IMR-90 (cell line): ENCODE measurements at regions of chr11 and their contacts with region 1.

Region 1: GRCh38 chr11:33857933-33858371 is 33.9 kb downstream of the LMO2 start:
- DNase-seq: peak; percentile 54
- ATAC-seq: peak; percentile 87
- H3K4me3 ChIP-seq: no peak overlapping the region
- H3K27ac ChIP-seq: no peak overlapping the region
- H3K4me1 ChIP-seq: no peaks in the 10 kb centered on the region
- H3K27me3 ChIP-seq: peaks cover 60% of the 10 kb centered on the region
- CTCF ChIP-seq: peak; percentile 84
- POLR2A ChIP-seq: no peak
- RAD21 ChIP-seq: peak; percentile 81

Region 2: DNA sequence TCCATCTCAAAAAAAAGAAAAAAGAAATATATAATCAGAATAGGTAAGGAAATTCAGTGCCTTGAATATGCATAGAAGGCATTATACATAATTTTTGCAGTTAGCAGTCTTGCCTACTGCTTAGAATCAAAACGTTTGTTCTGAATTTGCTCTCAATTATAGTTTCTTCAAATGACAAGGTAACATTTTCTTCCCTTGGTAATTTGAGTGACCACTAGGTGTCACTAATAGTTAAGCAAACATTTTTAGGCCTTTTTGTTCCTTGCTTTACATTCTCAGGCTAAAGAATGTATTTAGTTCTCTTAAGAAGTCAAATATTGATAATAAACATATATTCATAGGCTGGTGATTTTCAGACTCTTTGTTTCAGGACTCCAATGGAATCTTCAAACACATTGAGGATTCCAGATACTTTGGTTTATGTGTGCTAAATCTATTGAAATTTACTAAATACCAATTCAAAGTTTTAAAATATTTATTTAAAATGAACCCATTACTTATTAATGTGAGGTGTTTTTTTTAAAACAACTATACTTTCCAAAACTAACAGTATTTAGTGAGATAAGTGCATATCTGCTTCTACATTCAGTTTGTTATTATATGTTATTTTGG is 897.3 kb before region 1 on chr11:
- CTCF ChIA-PET with region 1: no interaction called
- POLR2A ChIA-PET with region 1: no interaction called
- dilution Hi-C with region 1: no loop called
- in situ Hi-C with region 1: no loop called
- intact Hi-C with region 1: no loop called
- DNase-seq: peak; percentile 71
- ATAC-seq: peak; percentile 61; the same call in 1 of the 2 replicates
- H3K4me3 ChIP-seq: no peak overlapping the region
- H3K27ac ChIP-seq: no peak overlapping the region
- H3K4me1 ChIP-seq: no peaks in the 10 kb centered on the region
- H3K27me3 ChIP-seq: no peaks in the 10 kb centered on the region
- CTCF ChIP-seq: peak; percentile 78
- POLR2A ChIP-seq: no peak
- RAD21 ChIP-seq: peak; percentile 85

Region 3: DNA sequence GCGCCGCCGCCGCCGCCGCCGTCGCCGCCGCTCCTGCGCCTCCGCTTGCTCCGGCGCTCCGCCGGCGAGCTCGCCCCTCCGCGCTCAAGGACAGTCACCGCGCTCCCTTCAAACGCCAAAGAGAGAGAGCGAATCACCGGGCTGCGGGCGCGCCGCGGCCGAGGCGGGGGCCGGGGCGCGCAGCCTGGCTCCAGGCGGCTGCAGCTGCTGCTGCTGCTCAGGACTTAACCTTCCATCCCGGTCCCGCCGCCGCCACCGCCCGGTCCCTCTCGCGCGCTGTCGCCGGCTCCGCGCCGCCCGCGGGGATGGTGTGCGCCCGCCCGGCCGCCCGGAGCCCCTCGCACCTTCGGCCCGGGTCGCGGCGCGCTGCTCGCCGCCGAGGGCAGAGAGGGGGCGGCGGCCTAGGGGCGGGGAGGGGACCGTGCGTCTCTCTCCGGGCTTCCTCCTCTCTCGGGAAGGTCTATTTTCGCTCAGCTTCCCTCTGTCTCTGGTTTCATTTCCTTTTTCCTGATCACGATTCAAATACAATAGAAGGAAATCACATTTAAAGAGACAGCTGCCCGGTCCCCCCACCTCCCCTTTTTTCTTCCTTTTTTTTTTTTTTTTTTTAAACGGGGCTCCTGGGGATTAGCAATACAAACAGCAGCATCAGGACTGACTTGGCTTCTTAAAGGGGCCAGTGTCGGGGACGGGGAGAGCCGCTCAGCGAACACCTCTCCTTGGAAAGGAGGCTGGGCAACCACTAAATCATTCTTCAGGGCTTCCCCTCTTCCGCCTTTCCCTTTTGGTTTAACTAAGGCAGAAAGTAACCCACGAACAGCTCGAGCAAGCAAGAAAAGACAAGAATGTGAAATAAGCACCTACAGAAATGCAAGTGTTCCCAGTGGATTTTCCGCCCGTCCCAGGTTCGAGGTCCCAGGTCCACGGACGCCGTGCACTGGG is 11.8 kb after region 1 on chr11:
- CTCF ChIA-PET with region 1: interaction called, 10 read pairs
- POLR2A ChIA-PET with region 1: interaction called, 4 read pairs
- dilution Hi-C with region 1: no loop called
- in situ Hi-C with region 1: no loop called
- intact Hi-C with region 1: no loop called
- DNase-seq: peak; percentile 2
- ATAC-seq: peak; percentile 72
- H3K4me3 ChIP-seq: peak overlapping the region; percentile 44
- H3K27ac ChIP-seq: no peak overlapping the region
- H3K4me1 ChIP-seq: no peaks in the 10 kb centered on the region
- H3K27me3 ChIP-seq: peaks cover 71% of the 10 kb centered on the region
- CTCF ChIP-seq: no peak
- POLR2A ChIP-seq: no peak
- RAD21 ChIP-seq: no peak

Region 4: GRCh38 chr11:33970984-33971466 is 113.1 kb after region 1 on chr11:
- CTCF ChIA-PET with region 1: interaction called, 4 read pairs
- POLR2A ChIA-PET with region 1: no interaction called
- dilution Hi-C with region 1: no loop called
- in situ Hi-C with region 1: loop called (anchors 5 kb)
- intact Hi-C with region 1: loop called (anchors 1 kb)
- DNase-seq: peak; percentile 50
- ATAC-seq: peak; percentile 93
- H3K4me3 ChIP-seq: no peak overlapping the region
- H3K27ac ChIP-seq: no peak overlapping the region
- H3K4me1 ChIP-seq: no peaks in the 10 kb centered on the region
- H3K27me3 ChIP-seq: peaks cover 26% of the 10 kb centered on the region
- CTCF ChIP-seq: peak; percentile 62
- POLR2A ChIP-seq: no peak
- RAD21 ChIP-seq: peak; percentile 70

Region 5: DNA sequence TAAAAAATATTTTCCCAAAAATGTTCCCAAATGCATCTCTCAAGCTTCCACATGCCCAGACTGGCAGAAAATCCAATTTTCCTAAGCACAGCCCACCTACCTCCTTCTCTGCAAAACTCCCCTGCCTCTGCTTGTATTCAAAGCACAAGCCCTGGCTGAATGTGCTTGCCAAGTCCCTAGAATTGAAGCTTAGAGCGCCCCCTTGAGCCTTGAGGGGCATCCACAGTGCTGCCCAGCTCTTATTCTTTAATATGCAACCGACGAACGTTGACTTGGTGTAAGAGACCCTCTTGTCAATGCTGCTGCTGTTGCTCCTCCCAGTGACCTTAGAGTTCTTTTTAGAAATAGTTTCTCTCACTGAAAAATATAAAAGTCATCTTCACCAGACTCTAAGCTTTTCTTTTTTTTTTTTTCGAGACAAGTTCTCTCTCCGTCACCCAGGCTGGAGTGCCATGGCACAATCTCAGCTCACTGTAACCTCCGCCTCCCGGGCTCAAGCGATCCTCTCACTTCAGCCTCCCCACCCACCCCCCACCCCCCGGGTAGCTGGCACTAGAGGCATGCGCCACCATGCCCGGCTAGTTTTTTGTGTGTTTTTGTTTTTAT is 130.1 kb after region 1 on chr11:
- CTCF ChIA-PET with region 1: interaction called, 10 read pairs
- POLR2A ChIA-PET with region 1: no interaction called
- dilution Hi-C with region 1: no loop called
- in situ Hi-C with region 1: no loop called
- intact Hi-C with region 1: loop called (anchors 1 kb)
- DNase-seq: peak; percentile 78
- ATAC-seq: peak; percentile 83
- H3K4me3 ChIP-seq: no peak overlapping the region
- H3K27ac ChIP-seq: no peak overlapping the region
- H3K4me1 ChIP-seq: no peaks in the 10 kb centered on the region
- H3K27me3 ChIP-seq: peaks cover 10% of the 10 kb centered on the region
- CTCF ChIP-seq: peak; percentile 78
- POLR2A ChIP-seq: no peak
- RAD21 ChIP-seq: peak; percentile 66